Stomach (tissue), 19 donors: ENCODE measurements at regions of chr18 and their contacts with region 1.

Region 1: GRCh38 chr18:77000527-77000926 is 132.1 kb downstream of the MBP start:
- DNase-seq: peak; percentile 62 to 82
- H3K4me3 ChIP-seq: peak overlapping the region in 1 of 4 donors; percentile 19
- H3K27ac ChIP-seq: no peak overlapping the region
- H3K4me1 ChIP-seq: peaks cover 0 to 16% (median 3%) of the 10 kb centered on the region in 4 donors
- H3K27me3 ChIP-seq: no peaks in the 10 kb centered on the region
- CTCF ChIP-seq: peak in 5 of 7 experiments; percentile 90 to 96 (median 93)
- EP300 ChIP-seq: no peak
- POLR2A ChIP-seq: no peak

Region 2: GRCh38 chr18:76943542-76944339 is 56.8 kb before region 1 on chr18:
- intact Hi-C with region 1: no loop called
- DNase-seq: peak in 1 of 2 donors; percentile 58
- H3K4me3 ChIP-seq: no peak overlapping the region
- H3K27ac ChIP-seq: peak overlapping the region in 3 of 5 donors; percentile 6 to 39 (median 31)
- H3K4me1 ChIP-seq: peaks cover 0 to 8% (median 2%) of the 10 kb centered on the region in 4 donors
- H3K27me3 ChIP-seq: no peaks in the 10 kb centered on the region
- CTCF ChIP-seq: no peak
- EP300 ChIP-seq: no peak
- POLR2A ChIP-seq: no peak

Region 3: GRCh38 chr18:77054606-77055428 is 54.3 kb after region 1 on chr18:
- intact Hi-C with region 1: loop called (anchors 10 kb)
- DNase-seq: peak; percentile 82 to 95
- H3K4me3 ChIP-seq: no peak overlapping the region
- H3K27ac ChIP-seq: peak overlapping the region; percentile 55 to 90 (median 81)
- H3K4me1 ChIP-seq: peaks cover 44 to 74% (median 49%) of the 10 kb centered on the region in 4 donors
- H3K27me3 ChIP-seq: no peaks in the 10 kb centered on the region
- CTCF ChIP-seq: peak in 5 of 7 experiments; percentile 26 to 66 (median 54)
- EP300 ChIP-seq: no peak
- POLR2A ChIP-seq: no peak

Region 4: GRCh38 chr18:77210249-77210648 is 209.7 kb after region 1 on chr18:
- intact Hi-C with region 1: loop called (anchors 5 kb)
- DNase-seq: no peak
- H3K4me3 ChIP-seq: no peak overlapping the region
- H3K27ac ChIP-seq: no peak overlapping the region
- H3K4me1 ChIP-seq: peaks cover 9 to 59% (median 31%) of the 10 kb centered on the region in 4 donors
- H3K27me3 ChIP-seq: no peaks in the 10 kb centered on the region
- CTCF ChIP-seq: no peak
- EP300 ChIP-seq: no peak
- POLR2A ChIP-seq: no peak